PC-3 (cell line): ENCODE measurements at regions of chr11 and their contacts with region 1.

Region 1: GRCh38 chr11:72672597-72673238 is 1.5 kb downstream of the PDE2A start:
- DNase-seq: no peak
- ATAC-seq: no peak
- H3K4me3 ChIP-seq: no peak overlapping the region
- H3K27ac ChIP-seq: no peak overlapping the region
- H3K4me1 ChIP-seq: no peaks in the 10 kb centered on the region
- H3K27me3 ChIP-seq: peaks cover 51% of the 10 kb centered on the region
- CTCF ChIP-seq: no peak

Region 2: GRCh38 chr11:72007088-72007476 is 665.6 kb before region 1 on chr11:
- CTCF ChIA-PET with region 1: no interaction called
- POLR2A ChIA-PET with region 1: interaction called, 19 read pairs
- intact Hi-C with region 1: no loop called
- DNase-seq: no peak
- ATAC-seq: no peak
- H3K4me3 ChIP-seq: no peak overlapping the region
- H3K27ac ChIP-seq: no peak overlapping the region
- H3K4me1 ChIP-seq: no peaks in the 10 kb centered on the region
- H3K27me3 ChIP-seq: no peaks in the 10 kb centered on the region
- CTCF ChIP-seq: no peak

Region 3: GRCh38 chr11:72793425-72794367 is 121.0 kb after region 1 on chr11 and contains the start of gene STARD10:
- CTCF ChIA-PET with region 1: no interaction called
- POLR2A ChIA-PET with region 1: no interaction called
- intact Hi-C with region 1: no loop called
- DNase-seq: peak; percentile 99
- ATAC-seq: peak; percentile 95
- H3K4me3 ChIP-seq: peak within 1 kb of the TSS; percentile 77
- H3K27ac ChIP-seq: peak within 1 kb of the TSS; percentile 40
- H3K4me1 ChIP-seq: peaks cover 27% of the 10 kb centered on the region
- H3K27me3 ChIP-seq: no peaks in the 10 kb centered on the region
- CTCF ChIP-seq: peak; percentile 99
- total RNA-seq, gene STARD10: 284 and 362 TPM in 2 replicates

Region 4: GRCh38 chr11:73047773-73048371 is 375.2 kb after region 1 on chr11:
- CTCF ChIA-PET with region 1: no interaction called
- POLR2A ChIA-PET with region 1: no interaction called
- intact Hi-C with region 1: no loop called
- DNase-seq: peak; percentile 26
- ATAC-seq: peak; percentile 61
- H3K4me3 ChIP-seq: no peak overlapping the region
- H3K27ac ChIP-seq: no peak overlapping the region
- H3K4me1 ChIP-seq: peaks cover 8% of the 10 kb centered on the region
- H3K27me3 ChIP-seq: no peaks in the 10 kb centered on the region
- CTCF ChIP-seq: no peak